Activated CD4-positive, alpha-beta T cell treated with anti-CD3 and anti-CD28 coated beads for 36 hours (primary cell): ENCODE measurements at regions of chr6 and their contacts with region 1.

Region 1: DNA sequence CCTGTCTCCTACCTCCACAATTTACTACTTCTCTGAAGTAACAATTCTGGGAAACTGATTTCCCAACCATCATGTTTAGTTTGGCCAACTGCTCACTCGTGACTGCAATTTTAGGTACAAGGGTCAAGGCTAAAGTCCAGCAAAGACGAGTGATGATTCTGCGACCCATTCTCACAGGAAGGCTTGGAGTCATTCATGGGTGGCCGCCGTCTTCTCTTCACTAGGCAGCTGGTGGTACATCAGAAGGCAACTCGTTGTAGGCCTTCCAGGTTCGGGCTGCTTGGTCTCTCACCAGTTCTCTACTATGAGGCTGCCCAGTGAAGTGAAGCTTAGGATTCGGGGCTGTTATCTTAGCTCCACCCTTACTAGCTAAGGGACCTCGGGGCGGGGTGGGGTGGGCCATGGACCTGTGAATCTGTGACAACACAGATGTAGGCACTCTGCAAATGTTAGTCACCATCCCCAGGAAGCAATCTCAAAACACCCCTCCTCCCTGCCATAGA is 483.7 kb upstream of the JARID2 start:
- DNase-seq: no peak
- ATAC-seq: no peak
- H3K4me3 Mint-ChIP-seq: no peak overlapping the region
- H3K27ac Mint-ChIP-seq: no peak overlapping the region
- H3K4me1 Mint-ChIP-seq: peaks cover 54% of the 10 kb centered on the region
- H3K27me3 Mint-ChIP-seq: no peaks in the 10 kb centered on the region

Region 2: GRCh38 chr6:14784596-14785492 is 22.7 kb after region 1 on chr6:
- CTCF ChIA-PET with region 1: no interaction called
- POLR2A ChIA-PET with region 1: interaction called, 10 read pairs
- intact Hi-C with region 1: no loop called
- DNase-seq: peak; percentile 42
- ATAC-seq: peak; percentile 66
- H3K4me3 Mint-ChIP-seq: peak overlapping the region; percentile 38
- H3K27ac Mint-ChIP-seq: peak overlapping the region; percentile 81
- H3K4me1 Mint-ChIP-seq: peaks cover 43% of the 10 kb centered on the region
- H3K27me3 Mint-ChIP-seq: no peaks in the 10 kb centered on the region